ENCODE measurements at regions of chr7 and their contacts with region 1.

Region 1: DNA sequence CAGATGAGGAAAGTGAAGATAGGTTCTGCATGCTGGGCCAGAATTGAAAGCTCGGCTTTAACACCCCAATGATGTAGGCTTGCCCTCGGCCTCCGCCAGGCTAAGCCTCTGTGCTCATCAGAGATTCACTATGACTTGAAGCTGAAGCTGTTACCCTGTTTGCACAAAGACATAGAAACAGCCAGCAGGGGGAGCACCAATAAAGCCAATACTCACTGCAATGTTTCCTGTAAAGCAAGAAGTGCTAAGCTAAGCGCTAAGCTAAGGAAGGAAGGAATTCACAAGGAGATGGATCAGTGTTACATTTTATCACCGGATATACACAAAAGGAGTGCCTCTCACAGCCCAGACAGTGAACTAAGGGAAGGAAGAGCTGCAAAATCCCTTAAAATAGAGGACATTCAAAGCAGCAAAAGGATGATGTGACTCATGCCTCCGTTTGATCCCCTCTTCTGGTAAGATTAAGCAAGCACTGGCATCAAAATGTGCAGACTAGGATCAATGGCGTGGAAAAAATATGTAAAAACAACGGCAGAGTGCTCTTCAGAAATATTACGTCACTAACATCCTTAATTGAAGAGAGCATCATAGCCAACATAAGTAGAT is 153.8 kb downstream of the COBL start:
- DNase-seq: peak; percentile 90
- ATAC-seq: peak; percentile 96
- H3K4me3 ChIP-seq: no peak overlapping the region
- H3K27ac ChIP-seq: no peak overlapping the region
- H3K4me1 ChIP-seq: no peaks in the 10 kb centered on the region; the same call in 1 of the 2 replicates
- H3K27me3 ChIP-seq: no peaks in the 10 kb centered on the region
- CTCF ChIP-seq: peak; percentile 94

Region 2: DNA sequence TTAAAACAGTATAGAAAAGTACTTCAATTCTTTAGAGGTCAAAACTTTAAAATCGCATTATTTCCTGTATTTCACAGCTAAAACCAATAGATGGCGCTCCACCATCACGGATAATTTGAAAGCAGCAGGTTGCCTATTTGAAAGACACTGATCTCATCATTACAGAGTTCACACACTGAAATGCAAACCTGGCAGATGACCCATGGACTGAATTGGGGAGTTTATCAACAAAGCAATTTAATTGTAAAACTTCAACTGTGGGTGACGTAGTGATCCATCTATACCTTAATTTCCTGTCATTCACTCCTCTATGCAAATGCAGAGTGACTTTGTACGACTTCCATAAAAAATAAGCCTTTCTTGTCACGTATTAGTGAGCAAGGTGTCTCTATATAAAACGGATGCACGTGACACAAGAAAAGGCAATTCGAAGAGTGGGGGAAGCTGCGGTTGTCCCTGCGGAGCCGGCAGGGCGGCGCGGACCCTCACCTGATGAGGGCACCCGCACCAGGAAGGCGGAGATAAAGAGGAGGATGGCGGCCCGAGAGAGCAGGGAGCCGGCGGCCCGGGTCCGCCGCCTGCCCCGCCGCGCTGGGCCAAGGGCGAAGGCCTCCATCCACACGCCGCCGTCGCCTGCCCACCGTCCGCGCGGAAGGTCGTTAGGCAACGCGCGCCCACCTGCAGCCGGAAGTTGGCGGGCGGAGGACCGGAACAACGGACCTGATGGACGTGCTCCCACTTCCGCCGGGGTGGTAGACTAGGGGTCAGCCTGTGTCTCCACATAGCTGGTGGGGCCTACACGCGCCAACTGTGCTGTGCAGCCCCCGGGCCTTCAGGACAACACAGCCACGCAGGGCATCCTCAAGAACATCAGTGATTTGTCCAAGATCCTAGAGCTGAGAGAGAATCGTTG is 1070.0 kb before region 1 on chr7 and contains the start of gene ZPBP:
- CTCF ChIA-PET with region 1: interaction called, 12 read pairs
- POLR2A ChIA-PET with region 1: no interaction called
- intact Hi-C with region 1: loop called (anchors 2 kb)
- DNase-seq: peak; percentile 67
- ATAC-seq: peak; percentile 45; the same call in 1 of the 2 replicates
- H3K4me3 ChIP-seq: peak within 1 kb of the TSS; percentile 51
- H3K27ac ChIP-seq: no peak within 1 kb of the TSS
- H3K4me1 ChIP-seq: no peaks in the 10 kb centered on the region
- H3K27me3 ChIP-seq: peaks cover 25% of the 10 kb centered on the region
- CTCF ChIP-seq: peak; percentile 84
- total RNA-seq, gene ZPBP: not detected in 2 replicates

Region 3: GRCh38 chr7:50467817-50468610 is 694.8 kb before region 1 on chr7:
- CTCF ChIA-PET with region 1: interaction called, 3 read pairs
- POLR2A ChIA-PET with region 1: no interaction called
- intact Hi-C with region 1: loop called (anchors 1 kb)
- DNase-seq: peak; percentile 84
- ATAC-seq: peak; percentile 92
- H3K4me3 ChIP-seq: peak overlapping the region; percentile 57
- H3K27ac ChIP-seq: no peak overlapping the region
- H3K4me1 ChIP-seq: peaks cover 5% of the 10 kb centered on the region; the same call in 1 of the 2 replicates
- H3K27me3 ChIP-seq: no peaks in the 10 kb centered on the region
- CTCF ChIP-seq: peak; percentile 89

Region 4: GRCh38 chr7:51141451-51142003 is 21.3 kb before region 1 on chr7:
- CTCF ChIA-PET with region 1: interaction called, 12 read pairs
- POLR2A ChIA-PET with region 1: no interaction called
- intact Hi-C with region 1: no loop called
- DNase-seq: peak; percentile 60
- ATAC-seq: peak; percentile 58
- H3K4me3 ChIP-seq: no peak overlapping the region
- H3K27ac ChIP-seq: no peak overlapping the region
- H3K4me1 ChIP-seq: peaks cover 18% of the 10 kb centered on the region
- H3K27me3 ChIP-seq: no peaks in the 10 kb centered on the region
- CTCF ChIP-seq: peak; percentile 84

Region 5: DNA sequence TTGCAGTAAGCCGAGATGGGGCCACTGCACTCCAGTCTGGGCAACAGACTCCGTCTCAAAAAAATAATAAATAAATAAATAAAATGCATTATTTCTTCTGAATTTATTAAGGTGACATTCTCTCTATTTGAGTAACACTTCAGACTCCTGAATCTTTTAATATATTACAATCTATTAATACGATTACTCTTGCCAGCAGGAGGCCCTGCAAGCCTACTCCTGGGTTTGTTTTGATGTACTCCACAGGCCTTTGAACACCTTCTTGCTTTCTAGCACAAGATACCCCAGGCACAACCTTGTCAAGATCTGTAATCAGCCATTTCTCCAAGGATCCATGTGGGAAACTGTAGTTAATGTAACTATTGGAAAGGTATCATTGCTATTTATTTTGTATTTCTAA is 90.3 kb after region 1 on chr7:
- CTCF ChIA-PET with region 1: interaction called, 10 read pairs
- POLR2A ChIA-PET with region 1: no interaction called
- intact Hi-C with region 1: loop called (anchors 1 kb)
- DNase-seq: peak; percentile 33
- ATAC-seq: peak; percentile 48; the same call in 1 of the 2 replicates
- H3K4me3 ChIP-seq: no peak overlapping the region
- H3K27ac ChIP-seq: no peak overlapping the region
- H3K4me1 ChIP-seq: peaks cover 27% of the 10 kb centered on the region
- H3K27me3 ChIP-seq: no peaks in the 10 kb centered on the region
- CTCF ChIP-seq: peak; percentile 47

Region 6: DNA sequence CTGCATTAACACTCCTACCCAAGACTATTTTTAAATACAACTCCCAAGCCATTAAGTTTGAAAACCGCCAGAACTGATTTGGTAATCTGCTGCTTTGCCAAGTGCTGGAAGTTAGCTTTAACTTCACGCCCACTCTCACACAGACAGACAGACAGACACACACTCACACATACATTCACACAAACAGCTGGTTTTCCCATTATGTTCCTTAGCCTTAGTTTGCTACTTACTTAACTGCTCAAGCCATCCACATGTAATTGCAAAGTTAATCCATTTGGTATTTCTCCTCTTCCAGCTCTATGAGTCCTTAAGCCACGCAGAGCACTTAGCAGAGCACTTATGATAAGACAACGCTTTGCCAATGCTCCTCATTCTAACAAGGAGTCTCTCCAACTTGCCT is 145.4 kb after region 1 on chr7:
- CTCF ChIA-PET with region 1: no interaction called
- POLR2A ChIA-PET with region 1: no interaction called
- intact Hi-C with region 1: no loop called
- DNase-seq: no peak
- ATAC-seq: no peak
- H3K4me3 ChIP-seq: no peak overlapping the region
- H3K27ac ChIP-seq: no peak overlapping the region
- H3K4me1 ChIP-seq: peaks cover 18% of the 10 kb centered on the region
- H3K27me3 ChIP-seq: no peaks in the 10 kb centered on the region
- CTCF ChIP-seq: no peak

Region 7: GRCh38 chr7:51366930-51367613 is 204.2 kb after region 1 on chr7:
- CTCF ChIA-PET with region 1: interaction called, 50 read pairs
- POLR2A ChIA-PET with region 1: no interaction called
- intact Hi-C with region 1: loop called (anchors 1 kb)
- DNase-seq: peak; percentile 75
- ATAC-seq: peak; percentile 96
- H3K4me3 ChIP-seq: no peak overlapping the region
- H3K27ac ChIP-seq: no peak overlapping the region
- H3K4me1 ChIP-seq: no peaks in the 10 kb centered on the region
- H3K27me3 ChIP-seq: no peaks in the 10 kb centered on the region
- CTCF ChIP-seq: peak; percentile 84